SK-N-SH (cell line): ENCODE measurements at regions of chrX and their contacts with region 1.

Region 1: DNA sequence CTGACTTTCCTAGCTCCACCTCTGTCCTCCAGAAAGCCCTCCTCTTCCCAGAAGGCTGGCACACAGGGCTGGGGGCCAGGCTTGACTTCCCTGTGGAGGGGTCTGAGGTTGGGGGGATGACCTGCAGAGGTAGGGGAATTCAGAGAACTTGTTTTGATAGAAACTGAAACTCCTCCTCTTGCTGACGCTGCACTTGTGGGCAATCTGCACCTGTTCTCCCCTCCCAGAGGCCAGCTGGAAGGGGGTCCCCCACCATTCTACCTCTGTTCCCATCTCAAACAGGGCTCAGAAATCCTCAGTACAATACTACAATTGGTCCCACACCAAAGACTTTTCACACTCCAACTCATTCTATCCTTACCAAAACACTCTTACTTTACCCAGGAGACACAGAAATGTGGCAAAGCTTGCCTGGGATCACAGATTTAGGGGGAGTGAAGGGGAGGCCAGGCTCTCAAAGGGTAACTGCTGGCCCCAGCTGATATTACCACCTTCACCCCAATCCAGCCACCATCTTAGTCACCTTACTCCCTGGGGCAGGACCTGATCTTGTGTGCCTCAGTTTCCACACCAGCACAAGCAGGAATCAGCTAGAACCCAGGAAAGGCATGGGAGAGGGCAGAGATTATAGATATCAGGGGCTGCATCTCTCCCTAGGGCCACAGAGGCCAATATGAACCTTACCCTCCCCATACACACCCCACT is 18.5 kb downstream of the OTUD5 start:
- DNase-seq: no peak
- H3K4me3 ChIP-seq: no peak overlapping the region
- H3K27ac ChIP-seq: no peak overlapping the region
- H3K4me1 ChIP-seq: no peaks in the 10 kb centered on the region; a peak in 1 of 4 replicates
- H3K27me3 ChIP-seq: no peaks in the 10 kb centered on the region
- CTCF ChIP-seq: no peak
- EP300 ChIP-seq: no peak
- RAD21 ChIP-seq: no peak

Region 2: DNA sequence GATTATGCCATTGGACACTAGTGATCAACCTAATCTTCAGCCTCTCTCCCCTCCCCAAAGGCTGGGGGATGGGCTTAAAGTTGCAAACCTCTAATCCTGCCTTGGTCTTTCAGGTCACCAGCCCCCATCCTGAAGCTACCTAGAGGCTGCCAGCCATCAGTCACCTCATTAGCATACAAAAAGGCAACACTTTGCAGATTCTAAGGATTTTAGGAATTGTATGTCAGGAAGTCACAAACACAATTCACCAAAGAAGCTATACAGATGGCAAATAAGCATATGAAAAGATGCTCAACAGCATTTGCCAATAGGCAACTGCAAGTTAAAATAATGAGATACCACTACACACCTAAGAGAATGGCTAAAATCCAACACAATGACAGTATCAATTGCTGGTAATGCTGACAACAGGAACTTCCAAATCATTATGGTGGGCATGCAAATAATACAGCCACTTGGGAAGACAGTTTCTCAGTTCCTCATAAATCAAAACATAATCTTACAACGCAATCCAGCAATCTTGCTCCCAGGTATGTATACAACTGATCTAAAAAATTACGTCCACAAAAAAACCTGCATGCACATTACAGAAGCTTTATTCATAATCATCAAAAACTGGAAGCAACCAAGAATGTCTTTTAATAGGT is 11.0 kb before region 1 on chrX:
- CTCF ChIA-PET with region 1: interaction called, 10 read pairs
- POLR2A ChIA-PET with region 1: no interaction called
- DNase-seq: no peak
- H3K4me3 ChIP-seq: no peak overlapping the region
- H3K27ac ChIP-seq: no peak overlapping the region
- H3K4me1 ChIP-seq: no peaks in the 10 kb centered on the region
- H3K27me3 ChIP-seq: no peaks in the 10 kb centered on the region
- CTCF ChIP-seq: no peak
- EP300 ChIP-seq: no peak
- RAD21 ChIP-seq: no peak